Esophagus muscularis mucosa (tissue), 4 donors: ENCODE measurements at regions of chr12 and their contacts with region 1.

Region 1: DNA sequence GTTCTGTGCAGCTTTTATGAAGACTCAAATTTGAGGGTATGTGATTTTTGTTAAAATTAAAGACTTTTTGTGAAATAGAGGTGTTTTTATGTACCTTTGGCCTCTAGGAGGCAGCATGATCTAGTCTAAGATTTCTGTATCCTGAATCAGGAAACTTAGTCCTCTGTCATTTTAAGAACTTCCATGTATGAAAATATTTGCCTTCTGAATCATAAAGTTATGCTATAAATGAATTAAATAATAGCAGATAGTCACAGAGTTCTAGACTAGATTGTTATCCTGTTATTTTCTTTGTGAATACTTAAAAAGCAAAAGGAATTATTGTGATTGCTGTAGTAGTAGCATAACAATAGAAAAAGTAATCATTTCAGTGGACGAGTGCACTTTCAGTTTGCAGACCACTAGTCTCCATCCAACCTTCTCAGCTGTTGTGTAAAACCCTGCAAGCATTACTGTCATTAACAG is 56.3 kb downstream of the FGD4 start:
- DNase-seq: no peak
- H3K4me3 ChIP-seq: peak overlapping the region; percentile 36 to 51 (median 43)
- H3K27ac ChIP-seq: peak overlapping the region; percentile 36 to 54 (median 46)
- H3K4me1 ChIP-seq: peaks cover 27 to 53% (median 48%) of the 10 kb centered on the region in 4 donors
- H3K27me3 ChIP-seq: no peaks in the 10 kb centered on the region
- CTCF ChIP-seq: peak; percentile 59 to 71 (median 62)
- EP300 ChIP-seq: no peak
- POLR2A ChIP-seq: no peak

Region 2: DNA sequence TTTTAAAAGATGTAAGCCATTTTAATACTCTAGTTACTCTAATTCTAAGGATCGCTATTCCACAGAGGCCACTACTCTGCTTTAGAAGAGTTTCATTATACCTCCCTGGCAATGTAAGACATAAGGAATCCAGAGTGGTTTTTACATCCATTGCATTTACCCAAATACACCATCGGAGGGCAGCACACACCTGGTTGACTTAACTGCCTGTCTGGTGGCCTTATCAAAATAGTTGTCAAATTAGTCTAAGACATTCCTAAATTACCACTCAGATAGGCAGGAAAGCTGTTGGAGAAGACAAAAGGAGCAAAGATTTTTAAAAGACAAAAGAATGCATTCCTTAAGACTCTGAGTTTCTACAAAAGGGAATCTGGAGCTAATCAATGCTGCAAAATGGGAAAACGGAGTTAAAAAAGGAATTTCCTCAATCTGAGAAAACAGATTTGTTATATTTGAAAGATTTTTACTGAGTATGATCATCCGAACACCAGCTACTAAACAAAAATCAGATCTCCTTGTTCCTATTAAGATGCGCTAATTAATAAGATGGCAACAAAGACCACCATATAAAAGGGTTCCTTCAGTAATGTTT is 90.1 kb before region 1 on chr12:
- intact Hi-C with region 1: loop called (anchors 10 kb)
- DNase-seq: no peak
- H3K4me3 ChIP-seq: no peak overlapping the region
- H3K27ac ChIP-seq: no peak overlapping the region
- H3K4me1 ChIP-seq: no peaks in the 10 kb centered on the region
- H3K27me3 ChIP-seq: no peaks in the 10 kb centered on the region
- CTCF ChIP-seq: peak; percentile 64 to 81 (median 73)
- EP300 ChIP-seq: no peak
- POLR2A ChIP-seq: no peak

Region 3: GRCh38 chr12:32399337-32400113 is 56.1 kb before region 1 on chr12 and contains the start of gene FGD4:
- intact Hi-C with region 1: loop called (anchors 5 kb)
- DNase-seq: peak; percentile 93
- H3K4me3 ChIP-seq: peak within 1 kb of the TSS; percentile 75 to 87 (median 82)
- H3K27ac ChIP-seq: peak within 1 kb of the TSS; percentile 74 to 84 (median 78)
- H3K4me1 ChIP-seq: peaks cover 5 to 25% (median 21%) of the 10 kb centered on the region in 4 donors
- H3K27me3 ChIP-seq: no peaks in the 10 kb centered on the region
- CTCF ChIP-seq: peak; percentile 24 to 47 (median 39)
- EP300 ChIP-seq: no peak
- POLR2A ChIP-seq: peak; percentile 22
- total RNA-seq, gene FGD4: 21.4 to 33.0 (median 26.9) TPM

Region 4: GRCh38 chr12:32574585-32574984 is 118.9 kb after region 1 on chr12:
- intact Hi-C with region 1: loop called (anchors 10 kb)
- DNase-seq: no peak
- H3K4me3 ChIP-seq: no peak overlapping the region
- H3K27ac ChIP-seq: no peak overlapping the region
- H3K4me1 ChIP-seq: peaks cover 0 to 4% (median under 1%) of the 10 kb centered on the region in 4 donors
- H3K27me3 ChIP-seq: no peaks in the 10 kb centered on the region
- CTCF ChIP-seq: no peak
- EP300 ChIP-seq: no peak
- POLR2A ChIP-seq: no peak

Region 5: GRCh38 chr12:32659908-32660440 is 204.3 kb after region 1 on chr12:
- intact Hi-C with region 1: loop called (anchors 5 kb)
- DNase-seq: no peak
- H3K4me3 ChIP-seq: no peak overlapping the region
- H3K27ac ChIP-seq: peak overlapping the region in 3 of 4 donors; percentile 58 to 77 (median 62)
- H3K4me1 ChIP-seq: peaks cover 12 to 23% (median 17%) of the 10 kb centered on the region in 4 donors
- H3K27me3 ChIP-seq: no peaks in the 10 kb centered on the region
- CTCF ChIP-seq: no peak
- EP300 ChIP-seq: no peak
- POLR2A ChIP-seq: no peak

Region 6: GRCh38 chr12:32671930-32672780 is 216.5 kb after region 1 on chr12:
- intact Hi-C with region 1: loop called (anchors 5 kb)
- DNase-seq: no peak
- H3K4me3 ChIP-seq: no peak overlapping the region
- H3K27ac ChIP-seq: no peak overlapping the region
- H3K4me1 ChIP-seq: peaks cover 0 to 11% (median 5%) of the 10 kb centered on the region in 4 donors
- H3K27me3 ChIP-seq: no peaks in the 10 kb centered on the region
- CTCF ChIP-seq: peak; percentile 41 to 58 (median 53)
- EP300 ChIP-seq: no peak
- POLR2A ChIP-seq: no peak

Region 7: DNA sequence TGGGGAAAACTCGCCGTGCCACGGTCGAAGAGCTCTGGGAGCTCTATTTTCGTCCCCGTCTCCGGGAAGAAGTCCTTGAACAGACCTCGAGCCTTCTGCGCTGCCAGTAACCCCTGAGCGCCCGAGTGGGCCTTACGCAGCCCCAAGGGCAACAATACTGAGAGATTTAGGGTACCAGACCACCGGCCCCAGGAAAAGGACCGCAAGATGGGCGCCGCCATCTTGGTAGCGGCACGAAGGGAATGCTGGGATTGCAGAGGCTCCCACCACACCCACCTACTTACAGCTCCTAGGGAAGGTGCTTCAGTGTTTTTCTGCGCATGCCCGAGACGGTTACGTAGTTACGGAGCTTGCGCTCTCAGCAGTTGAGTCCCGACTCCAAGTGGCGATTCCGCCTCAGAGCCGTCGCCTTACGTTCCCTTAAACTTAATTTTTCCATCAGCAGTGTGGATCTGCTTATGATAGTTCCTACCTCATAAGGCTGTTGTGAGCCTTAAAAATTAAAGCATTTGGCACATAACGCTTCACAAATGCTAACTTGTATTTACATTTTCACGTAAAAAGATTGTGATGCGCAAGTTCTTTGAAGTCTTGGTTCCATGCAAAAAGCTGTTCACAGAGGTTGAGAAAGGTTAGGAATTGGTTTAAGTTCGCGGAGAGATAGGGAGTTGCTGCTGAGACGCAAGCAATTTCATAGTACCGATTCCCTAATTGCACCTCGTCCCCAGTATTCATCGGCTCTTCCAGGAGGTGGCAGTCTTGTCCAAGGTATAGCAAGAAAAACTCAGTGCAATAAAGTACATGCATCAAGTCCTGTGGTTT is 300.2 kb after region 1 on chr12 and contains the start of gene YARS2:
- intact Hi-C with region 1: loop called (anchors 10 kb)
- DNase-seq: peak; percentile 96
- H3K4me3 ChIP-seq: peak within 1 kb of the TSS; percentile 92 to 97 (median 94)
- H3K27ac ChIP-seq: peak within 1 kb of the TSS; percentile 84 to 89 (median 88)
- H3K4me1 ChIP-seq: peaks cover 11 to 24% (median 21%) of the 10 kb centered on the region in 4 donors
- H3K27me3 ChIP-seq: peaks cover 0 to 1% (median 0%) of the 10 kb centered on the region in 4 donors
- CTCF ChIP-seq: peak; percentile 73 to 84 (median 79)
- EP300 ChIP-seq: no peak
- POLR2A ChIP-seq: no peak
- total RNA-seq, gene YARS2: 12.3 to 15.0 (median 14.7) TPM